Left ventricle myocardium superior (tissue), 1 donor: ENCODE measurements at regions of chr18 and their contacts with region 1.

Region 1: DNA sequence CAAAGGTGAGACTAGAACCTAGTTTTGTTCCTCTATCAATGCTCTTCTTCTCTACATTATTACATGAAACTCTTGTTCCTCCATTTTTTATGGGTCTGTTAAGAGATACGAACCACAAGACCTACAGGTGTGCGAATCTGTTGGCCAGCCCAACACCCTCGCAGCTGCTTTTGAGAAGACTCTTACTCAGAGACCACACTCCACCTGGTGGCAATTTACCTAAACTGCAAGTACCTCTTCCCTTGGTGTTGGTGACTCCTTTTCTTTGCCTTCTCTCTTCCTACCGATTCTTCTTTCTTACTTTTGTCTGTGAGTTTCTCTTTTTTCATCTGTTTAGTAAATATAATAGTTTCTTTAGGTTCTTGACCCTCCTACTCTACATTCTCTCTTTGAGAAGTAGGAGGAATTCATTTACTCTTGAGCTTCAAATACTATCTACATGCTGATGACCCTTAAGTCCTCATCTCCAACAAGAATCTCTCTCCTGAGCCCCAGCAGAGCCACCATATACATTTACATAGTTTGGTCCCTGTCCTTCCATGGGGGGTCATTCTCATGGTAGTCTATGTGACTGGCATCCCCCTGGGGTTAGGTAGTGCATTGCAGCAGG is 81.8 kb upstream of the GAREM1 start:
- DNase-seq: peak; percentile 32
- ATAC-seq: peak; percentile 70

Region 2: DNA sequence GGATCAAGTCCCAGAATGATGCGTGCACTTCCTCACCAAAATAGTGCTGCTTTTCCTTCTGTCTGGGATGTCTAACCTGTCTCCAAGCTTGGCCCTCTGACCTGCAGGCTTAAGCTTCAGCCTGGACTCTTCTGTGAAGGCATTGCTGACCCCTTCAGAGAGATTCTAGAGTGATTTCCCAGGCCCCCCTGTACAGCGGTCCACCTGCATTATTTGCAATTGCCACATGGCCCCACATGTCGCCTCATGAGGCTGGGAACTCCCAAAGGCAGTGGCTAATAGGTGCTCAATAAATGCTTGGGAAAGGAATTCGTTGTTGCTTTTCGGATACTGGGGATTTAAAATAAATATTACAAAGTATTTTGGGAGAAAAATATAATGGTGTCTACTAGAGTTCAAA is 394.9 kb before region 1 on chr18:
- intact Hi-C with region 1: loop called (anchors 2 kb)
- DNase-seq: no peak
- ATAC-seq: no peak

Region 3: DNA sequence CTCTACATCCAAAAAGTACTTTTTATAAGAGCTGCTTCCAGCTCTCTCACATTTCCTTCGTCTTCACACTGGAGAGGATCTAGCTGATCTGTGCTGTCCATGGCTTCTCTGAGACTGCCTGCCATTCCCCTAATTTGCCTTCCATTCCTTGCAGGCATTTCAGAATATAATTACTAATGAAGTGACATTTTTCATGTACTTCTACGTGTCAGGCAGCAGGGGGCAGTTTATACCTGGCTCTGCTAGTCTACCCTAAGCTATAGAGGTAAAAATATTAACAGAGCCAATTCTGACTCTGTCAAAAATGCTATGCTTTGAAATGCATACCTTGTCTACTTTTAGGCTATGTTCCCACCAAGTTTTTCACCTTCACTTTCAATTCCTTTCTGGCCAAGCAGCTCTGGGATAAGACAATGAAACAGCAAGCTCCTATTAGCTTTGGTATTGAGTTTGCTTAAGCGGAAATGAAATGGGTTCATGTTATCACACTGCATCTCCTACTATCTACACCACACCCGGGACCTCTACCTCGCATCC is 280.8 kb before region 1 on chr18:
- intact Hi-C with region 1: loop called (anchors 5 kb)
- DNase-seq: no peak
- ATAC-seq: peak; percentile 81